PC-9 (cell line): ENCODE measurements at regions of chr2 and their contacts with region 1.

Region 1: DNA sequence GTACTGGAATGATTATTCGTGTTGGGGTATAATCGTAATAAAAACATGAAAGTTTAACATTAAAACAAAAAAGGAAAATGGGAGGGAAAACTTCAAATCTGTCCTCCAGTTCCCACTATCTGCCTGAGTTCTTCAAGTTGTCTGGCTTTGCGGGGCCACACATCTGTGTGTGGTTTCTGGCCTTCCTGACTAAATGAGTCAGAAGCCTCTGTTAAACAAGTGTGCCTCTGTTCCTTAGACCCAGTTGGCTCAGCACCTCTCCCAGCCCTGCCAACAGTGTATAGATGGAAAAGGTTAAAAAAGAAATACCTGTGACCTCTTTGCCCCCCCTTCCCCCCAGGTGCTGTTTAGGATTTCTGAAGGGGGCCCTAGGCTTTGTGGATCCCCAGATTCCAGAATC is 30.2 kb downstream of the XDH start:
- DNase-seq: peak in 1 of 2 experiments; percentile 92
- H3K4me3 ChIP-seq: peak overlapping the region; percentile 22; the same call in 1 of the 2 replicates
- H3K27ac ChIP-seq: peak overlapping the region; percentile 98
- H3K4me1 ChIP-seq: peaks cover 46% of the 10 kb centered on the region
- H3K27me3 ChIP-seq: no peaks in the 10 kb centered on the region
- CTCF ChIP-seq: no peak

Region 2: DNA sequence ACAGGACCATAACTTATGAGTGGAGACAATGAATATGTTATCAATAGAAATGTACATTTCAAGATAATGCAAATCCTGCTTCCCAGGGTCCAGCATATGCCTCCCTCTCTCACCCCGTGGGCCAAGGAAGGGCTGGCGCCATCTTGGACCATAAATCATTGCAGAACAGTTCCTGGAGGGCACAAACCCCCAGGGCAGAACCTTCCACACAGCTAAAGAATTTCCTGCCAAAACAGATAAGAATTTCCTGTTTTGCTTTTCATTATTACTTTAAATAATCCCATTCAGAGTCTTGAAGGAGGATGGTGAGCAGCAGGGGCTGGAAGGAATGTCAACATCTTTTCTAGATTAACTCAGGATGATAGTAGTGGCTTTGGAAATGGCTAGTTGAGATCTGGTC is 96.7 kb before region 1 on chr2:
- CTCF ChIA-PET with region 1: no interaction called
- POLR2A ChIA-PET with region 1: no interaction called
- intact Hi-C with region 1: no loop called
- DNase-seq: no peak
- H3K4me3 ChIP-seq: no peak overlapping the region
- H3K27ac ChIP-seq: no peak overlapping the region
- H3K4me1 ChIP-seq: peaks cover 7% of the 10 kb centered on the region; the same call in 1 of the 2 replicates
- H3K27me3 ChIP-seq: no peaks in the 10 kb centered on the region
- CTCF ChIP-seq: no peak

Region 3: GRCh38 chr2:31401580-31401979 is 17.2 kb after region 1 on chr2:
- CTCF ChIA-PET with region 1: no interaction called
- POLR2A ChIA-PET with region 1: no interaction called
- intact Hi-C with region 1: loop called (anchors 1 kb)
- DNase-seq: peak; percentile 83 to 99
- H3K4me3 ChIP-seq: no peak overlapping the region
- H3K27ac ChIP-seq: peak overlapping the region; percentile 86
- H3K4me1 ChIP-seq: peaks cover 35% of the 10 kb centered on the region
- H3K27me3 ChIP-seq: no peaks in the 10 kb centered on the region
- CTCF ChIP-seq: no peak

Region 4: DNA sequence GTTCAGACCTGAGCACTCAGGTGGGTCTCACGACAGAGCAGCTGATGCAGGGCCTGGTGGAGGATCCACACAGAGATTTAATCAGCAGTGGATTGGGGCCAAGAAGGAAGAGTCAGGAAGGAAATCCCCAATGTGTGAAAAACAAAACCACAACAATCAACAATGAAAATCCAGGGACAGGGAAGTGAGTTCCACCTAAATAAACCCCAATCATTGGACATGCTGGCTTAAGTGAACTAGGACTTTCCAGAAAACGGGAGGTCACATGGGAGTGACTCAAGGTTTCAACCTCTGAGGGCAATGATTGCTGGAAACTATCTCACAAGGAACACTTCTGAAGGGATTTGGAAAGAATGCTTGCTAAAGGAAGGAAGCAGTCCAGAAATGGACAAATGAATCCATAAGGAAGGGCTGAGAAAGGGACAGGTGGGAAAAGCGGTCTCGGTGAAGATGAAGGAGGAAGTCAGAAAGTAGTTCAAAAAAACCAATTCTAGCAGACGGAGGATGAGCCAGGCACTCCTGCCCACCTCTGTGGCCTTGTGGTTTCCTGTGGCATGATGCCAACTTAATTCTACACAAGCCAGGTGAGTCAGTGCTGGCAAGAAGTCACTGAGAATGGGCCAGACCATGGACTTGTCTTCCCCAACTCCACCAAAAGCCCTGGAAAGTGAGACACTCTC is 45.5 kb after region 1 on chr2:
- CTCF ChIA-PET with region 1: interaction called, 3 read pairs
- POLR2A ChIA-PET with region 1: no interaction called
- intact Hi-C with region 1: loop called (anchors 1 kb)
- DNase-seq: peak; percentile 73 to 86
- H3K4me3 ChIP-seq: 0 out of 2 replicates have a peak overlapping the region, but pooled peaks have one; percentile 4
- H3K27ac ChIP-seq: peak overlapping the region; percentile 72
- H3K4me1 ChIP-seq: peaks cover 30% of the 10 kb centered on the region
- H3K27me3 ChIP-seq: no peaks in the 10 kb centered on the region
- CTCF ChIP-seq: no peak